Panc1 (cell line): ENCODE measurements at regions of chr2 and their contacts with region 1.

Region 1: GRCh38 chr2:53075760-53076159 is 691.8 kb upstream of the CHAC2 start:
- DNase-seq: no peak
- ATAC-seq: no peak
- H3K4me3 ChIP-seq: no peak overlapping the region
- H3K27ac ChIP-seq: no peak overlapping the region
- H3K4me1 ChIP-seq: no peaks in the 10 kb centered on the region
- H3K27me3 ChIP-seq: no peaks in the 10 kb centered on the region
- CTCF ChIP-seq: no peak

Region 2: DNA sequence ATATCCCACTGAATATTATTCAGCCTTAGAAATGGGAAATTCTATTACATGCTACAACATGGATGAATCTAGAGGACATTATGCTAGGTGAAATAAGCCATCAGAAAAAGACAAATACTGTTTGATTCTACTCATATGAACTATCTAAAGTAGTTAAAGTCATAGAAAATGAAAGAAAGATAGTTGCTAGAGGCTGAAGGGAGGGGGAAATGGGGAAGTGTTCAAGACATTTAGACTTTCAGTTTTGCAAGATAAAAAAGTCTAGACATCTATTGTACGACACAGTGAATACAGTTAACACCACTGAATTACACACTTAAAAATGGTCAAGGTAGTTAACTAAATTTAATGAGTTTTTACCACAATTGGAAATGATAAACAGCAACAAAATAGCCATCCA is 144.1 kb before region 1 on chr2:
- CTCF ChIA-PET with region 1: no interaction called
- POLR2A ChIA-PET with region 1: no interaction called
- in situ Hi-C with region 1: no loop called
- intact Hi-C with region 1: no loop called
- DNase-seq: no peak
- ATAC-seq: no peak
- H3K4me3 ChIP-seq: no peak overlapping the region
- H3K27ac ChIP-seq: no peak overlapping the region
- H3K4me1 ChIP-seq: peaks cover 3% of the 10 kb centered on the region; the same call in 1 of the 2 replicates
- H3K27me3 ChIP-seq: no peaks in the 10 kb centered on the region
- CTCF ChIP-seq: no peak

Region 3: GRCh38 chr2:53087262-53087873 is 11.6 kb after region 1 on chr2:
- CTCF ChIA-PET with region 1: no interaction called
- POLR2A ChIA-PET with region 1: no interaction called
- in situ Hi-C with region 1: no loop called
- intact Hi-C with region 1: loop called (anchors 1 kb)
- DNase-seq: no peak
- ATAC-seq: no peak
- H3K4me3 ChIP-seq: no peak overlapping the region
- H3K27ac ChIP-seq: no peak overlapping the region
- H3K4me1 ChIP-seq: no peaks in the 10 kb centered on the region
- H3K27me3 ChIP-seq: no peaks in the 10 kb centered on the region
- CTCF ChIP-seq: no peak

Region 4: GRCh38 chr2:53104263-53104662 is 28.5 kb after region 1 on chr2:
- CTCF ChIA-PET with region 1: no interaction called
- POLR2A ChIA-PET with region 1: no interaction called
- in situ Hi-C with region 1: no loop called
- intact Hi-C with region 1: no loop called
- DNase-seq: peak; percentile 4
- ATAC-seq: no peak
- H3K4me3 ChIP-seq: no peak overlapping the region
- H3K27ac ChIP-seq: no peak overlapping the region
- H3K4me1 ChIP-seq: no peaks in the 10 kb centered on the region
- H3K27me3 ChIP-seq: no peaks in the 10 kb centered on the region
- CTCF ChIP-seq: no peak

Region 5: DNA sequence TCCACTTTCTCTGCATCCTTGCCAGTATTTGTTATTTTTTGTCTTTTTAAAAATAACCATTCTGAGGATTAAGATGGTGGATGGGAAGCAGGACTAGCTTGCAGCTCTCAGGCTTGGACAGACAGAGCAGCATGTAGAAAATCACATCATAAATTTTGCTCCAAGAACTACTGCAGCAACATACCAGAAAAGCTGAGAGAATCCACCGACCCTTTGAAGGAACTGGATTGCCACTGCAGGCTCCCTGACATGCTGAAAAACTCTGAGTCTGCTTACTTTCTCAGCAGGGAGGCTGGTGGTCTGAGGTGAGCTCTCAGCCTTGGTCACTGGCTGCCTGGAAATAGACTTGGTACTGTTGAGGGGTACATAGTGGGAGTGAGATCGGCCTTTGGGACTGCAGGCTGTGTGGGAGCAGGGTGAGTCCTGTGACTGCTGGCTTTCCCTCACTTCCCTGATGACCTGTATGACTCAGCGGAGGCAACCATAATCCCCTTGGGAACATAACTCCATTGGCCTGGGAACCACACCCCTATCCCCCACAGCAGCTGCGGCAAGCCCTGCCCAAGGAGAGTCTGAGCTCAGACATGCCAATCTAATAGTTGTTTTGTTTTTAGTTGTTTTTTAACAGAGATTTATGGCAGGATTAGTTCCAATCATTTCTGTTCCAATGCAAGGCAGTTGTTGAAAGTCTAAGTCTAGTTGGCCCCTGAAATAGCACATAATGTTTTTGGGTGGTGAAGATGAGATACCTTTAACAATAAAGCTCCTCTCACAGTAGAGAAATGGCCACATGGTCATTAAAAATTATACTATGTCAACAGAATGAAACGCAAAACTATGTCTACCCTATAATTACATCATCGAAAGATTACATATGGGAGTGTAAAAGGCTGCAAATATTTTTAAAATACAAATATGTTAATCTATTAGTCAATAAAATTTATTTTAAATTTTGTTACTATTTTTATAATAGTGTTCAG is 277.7 kb after region 1 on chr2:
- CTCF ChIA-PET with region 1: no interaction called
- POLR2A ChIA-PET with region 1: no interaction called
- in situ Hi-C with region 1: no loop called
- intact Hi-C with region 1: no loop called
- DNase-seq: no peak
- ATAC-seq: no peak
- H3K4me3 ChIP-seq: no peak overlapping the region
- H3K27ac ChIP-seq: no peak overlapping the region
- H3K4me1 ChIP-seq: no peaks in the 10 kb centered on the region
- H3K27me3 ChIP-seq: no peaks in the 10 kb centered on the region
- CTCF ChIP-seq: no peak

Region 6: GRCh38 chr2:53854678-53855077 is 778.9 kb after region 1 on chr2:
- CTCF ChIA-PET with region 1: no interaction called
- POLR2A ChIA-PET with region 1: no interaction called
- in situ Hi-C with region 1: no loop called
- intact Hi-C with region 1: no loop called
- DNase-seq: no peak
- ATAC-seq: no peak
- H3K4me3 ChIP-seq: no peak overlapping the region
- H3K27ac ChIP-seq: no peak overlapping the region
- H3K4me1 ChIP-seq: no peaks in the 10 kb centered on the region
- H3K27me3 ChIP-seq: no peaks in the 10 kb centered on the region
- CTCF ChIP-seq: no peak